Common myeloid progenitor, CD34-positive (primary cell): ENCODE measurements at regions of chr1 and their contacts with region 1.

Region 1: DNA sequence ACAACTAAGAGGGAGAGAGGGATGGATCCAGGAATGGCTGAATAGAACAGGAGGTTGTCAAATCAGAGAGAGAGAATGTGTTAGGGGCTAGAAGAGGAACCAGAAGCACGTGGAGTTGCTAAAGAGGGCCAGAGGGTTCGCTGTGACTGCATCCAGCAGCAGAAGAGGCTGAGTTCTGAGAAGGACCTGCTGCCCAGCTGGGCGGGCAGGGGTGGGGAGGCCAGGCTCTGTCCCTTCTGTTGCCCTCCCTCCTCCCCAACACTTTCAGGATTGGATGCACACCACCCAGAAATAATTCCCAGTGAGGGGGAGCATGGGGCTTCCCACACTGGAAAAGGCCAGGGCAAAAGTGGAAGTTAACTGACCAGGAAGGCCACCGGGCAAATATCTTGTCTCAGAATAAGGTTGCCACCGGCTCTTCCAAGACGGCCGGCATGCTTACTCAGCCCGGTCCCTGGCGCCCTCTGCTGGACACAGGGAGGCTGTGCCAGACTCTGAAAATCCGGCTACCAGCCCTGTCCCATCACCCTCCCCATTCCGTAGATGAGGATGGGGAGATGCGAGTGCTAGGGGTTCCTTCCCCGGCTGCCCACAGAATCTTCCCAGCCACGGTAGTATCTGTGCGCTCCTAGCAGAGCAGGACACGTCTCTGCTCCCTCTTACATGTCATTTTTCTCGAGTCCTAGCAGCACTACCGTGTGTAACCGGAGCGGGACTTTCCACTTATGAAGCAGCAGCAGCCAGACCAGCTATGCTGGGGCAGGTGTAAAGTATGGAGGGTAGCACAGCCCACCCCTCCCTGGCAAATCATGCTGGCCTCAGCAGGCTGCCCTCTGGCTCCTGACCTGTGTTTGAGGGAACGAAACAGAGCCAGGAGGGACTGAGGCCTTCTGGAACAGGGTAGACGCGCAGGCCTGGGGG is 46.8 kb upstream of the A3GALT2 start:
- DNase-seq: peak; percentile 71 to 80 (median 77)
- H3K4me3 ChIP-seq: peak overlapping the region in 1 of 7 experiments; percentile 8
- H3K27ac ChIP-seq: no peak overlapping the region
- H3K4me1 ChIP-seq: peaks cover 0 to 23% (median 5%) of the 10 kb centered on the region in 4 experiments
- H3K27me3 ChIP-seq: no peaks in the 10 kb centered on the region

Region 2: DNA sequence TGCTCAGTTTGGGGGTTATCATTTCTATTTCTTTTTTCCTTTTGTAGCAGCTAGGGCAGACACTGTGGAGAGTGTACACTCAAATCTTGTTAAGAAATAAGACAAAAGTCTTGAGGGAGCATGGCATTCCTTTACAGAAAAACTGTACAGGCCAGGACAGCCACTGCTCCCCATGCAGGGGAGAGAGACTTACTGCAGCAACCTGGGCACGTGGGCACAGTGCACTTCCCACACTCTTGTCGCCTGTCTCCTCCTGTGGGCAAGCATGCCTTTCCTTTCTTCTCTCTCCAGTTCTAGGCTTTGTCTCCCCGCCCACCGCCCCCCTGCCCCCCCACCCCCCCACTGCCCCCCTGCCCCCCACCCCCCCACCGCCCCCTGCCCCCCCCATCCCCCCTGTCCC is 11.2 kb after region 1 on chr1:
- CTCF ChIA-PET with region 1: interaction called, 16 read pairs
- POLR2A ChIA-PET with region 1: no interaction called
- DNase-seq: peak in 2 of 3 donors; percentile 54 to 67
- H3K4me3 ChIP-seq: no peak overlapping the region
- H3K27ac ChIP-seq: no peak overlapping the region
- H3K4me1 ChIP-seq: peaks cover 10 to 62% (median 49%) of the 10 kb centered on the region in 4 experiments
- H3K27me3 ChIP-seq: no peaks in the 10 kb centered on the region

Region 3: GRCh38 chr1:33410091-33410701 is 42.5 kb after region 1 on chr1:
- CTCF ChIA-PET with region 1: no interaction called
- POLR2A ChIA-PET with region 1: no interaction called
- DNase-seq: no peak
- H3K4me3 ChIP-seq: no peak overlapping the region
- H3K27ac ChIP-seq: no peak overlapping the region
- H3K4me1 ChIP-seq: no peaks in the 10 kb centered on the region
- H3K27me3 ChIP-seq: no peaks in the 10 kb centered on the region